Activated T-helper 1 cell treated with anti-CD3 and anti-CD28 coated beads, Interleukin-12 subunit alpha, Interleukin-12 subunit beta, Interleukin-2, Interleukin-4 antibody, amounts not matched to agents 30 ng/mL and 10 ng/mL and 1 ng/mL, durations not matched to agents 14 hours and 24 hours and 36 hours (primary cell): ENCODE measurements at regions of chr7 and their contacts with region 1.

Region 1: GRCh38 chr7:149742075-149742701 is 31.2 kb downstream of the ZNF467 start:
- DNase-seq: peak; percentile 43
- H3K4me3 Mint-ChIP-seq: peak overlapping the region; percentile 79
- H3K27ac Mint-ChIP-seq: no peak overlapping the region
- H3K4me1 Mint-ChIP-seq: peaks cover 10% of the 10 kb centered on the region
- H3K27me3 Mint-ChIP-seq: peaks cover 37% of the 10 kb centered on the region

Region 2: DNA sequence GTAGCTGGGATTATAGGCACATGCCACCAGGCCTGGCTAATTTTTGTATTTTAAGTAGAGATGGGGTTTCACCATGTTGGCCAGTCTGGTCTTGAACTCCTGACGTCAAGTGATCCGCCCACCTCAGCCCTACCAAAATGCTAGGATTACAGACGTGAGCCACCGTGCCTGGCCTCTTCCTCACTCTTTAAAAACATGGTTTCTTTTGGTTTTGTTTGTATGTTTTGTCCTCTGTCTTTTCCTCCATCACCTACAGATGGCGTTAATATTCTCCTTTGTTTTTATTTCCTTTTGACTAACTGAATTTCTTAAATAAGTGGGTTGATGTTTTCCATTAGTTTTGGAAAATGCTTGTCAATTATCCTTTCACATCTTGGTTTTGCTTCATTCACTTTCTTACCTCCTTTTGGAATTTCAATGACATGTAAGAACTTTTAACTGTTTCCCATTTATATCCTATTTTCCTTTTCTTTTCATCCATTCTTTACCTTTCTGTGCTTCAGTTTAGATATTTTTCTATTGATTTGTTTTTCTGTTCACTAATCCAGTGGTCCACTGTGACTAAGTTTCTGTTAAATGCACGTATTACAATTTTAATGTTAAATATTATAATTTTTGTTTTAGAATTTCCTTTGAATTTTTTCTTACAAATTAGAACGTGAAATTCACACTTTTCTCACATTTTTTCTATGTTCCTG is 72.9 kb before region 1 on chr7:
- intact Hi-C with region 1: loop called (anchors 1 kb)
- DNase-seq: no peak
- H3K4me3 Mint-ChIP-seq: no peak overlapping the region
- H3K27ac Mint-ChIP-seq: no peak overlapping the region
- H3K4me1 Mint-ChIP-seq: no peaks in the 10 kb centered on the region
- H3K27me3 Mint-ChIP-seq: peaks cover 30% of the 10 kb centered on the region